Activated B cell treated with CpG ODN at 0.5 μM for 24 hours (primary cell): ENCODE measurements at regions of chr7 and their contacts with region 1.

Region 1: GRCh38 chr7:100745184-100745583 is 11.8 kb downstream of the ZAN start:
- DNase-seq: peak; percentile 45
- ATAC-seq: peak; percentile 98
- H3K4me3 Mint-ChIP-seq: peak overlapping the region; percentile 90
- H3K27ac Mint-ChIP-seq: peak overlapping the region; percentile 87
- H3K4me1 Mint-ChIP-seq: peaks cover 4% of the 10 kb centered on the region
- H3K27me3 Mint-ChIP-seq: peaks cover 10% of the 10 kb centered on the region
- CTCF ChIP-seq: no peak

Region 2: GRCh38 chr7:99631295-99632109 is 1113.7 kb before region 1 on chr7:
- CTCF ChIA-PET with region 1: no interaction called
- POLR2A ChIA-PET with region 1: no interaction called
- intact Hi-C with region 1: no loop called
- DNase-seq: no peak
- ATAC-seq: no peak
- H3K4me3 Mint-ChIP-seq: no peak overlapping the region
- H3K27ac Mint-ChIP-seq: no peak overlapping the region
- H3K4me1 Mint-ChIP-seq: no peaks in the 10 kb centered on the region
- H3K27me3 Mint-ChIP-seq: no peaks in the 10 kb centered on the region
- CTCF ChIP-seq: no peak

Region 3: GRCh38 chr7:100789055-100789454 is 43.9 kb after region 1 on chr7:
- CTCF ChIA-PET with region 1: no interaction called
- POLR2A ChIA-PET with region 1: no interaction called
- intact Hi-C with region 1: loop called (anchors 5 kb)
- DNase-seq: no peak
- ATAC-seq: no peak
- H3K4me3 Mint-ChIP-seq: no peak overlapping the region
- H3K27ac Mint-ChIP-seq: no peak overlapping the region
- H3K4me1 Mint-ChIP-seq: peaks cover 8% of the 10 kb centered on the region
- H3K27me3 Mint-ChIP-seq: peaks cover 14% of the 10 kb centered on the region
- CTCF ChIP-seq: no peak